PC-9 (cell line): ENCODE measurements at regions of chr5 and their contacts with region 1.

Region 1: GRCh38 chr5:178626484-178627258 is at the start of gene CLK4:
- DNase-seq: peak; percentile 77 to 95
- H3K4me3 ChIP-seq: peak within 1 kb of the TSS; percentile 85
- H3K27ac ChIP-seq: peak within 1 kb of the TSS; percentile 60
- H3K4me1 ChIP-seq: peaks cover 41% of the 10 kb centered on the region
- H3K27me3 ChIP-seq: no peaks in the 10 kb centered on the region
- CTCF ChIP-seq: no peak
- total RNA-seq, gene CLK4: 25.0 and 29.7 TPM in 2 replicates

Region 2: GRCh38 chr5:178232124-178232919 is 394.3 kb before region 1 on chr5 and contains the start of gene PHYKPL:
- CTCF ChIA-PET with region 1: no interaction called
- POLR2A ChIA-PET with region 1: no interaction called
- intact Hi-C with region 1: loop called (anchors 10 kb)
- DNase-seq: peak; percentile 42 to 70
- H3K4me3 ChIP-seq: peak within 1 kb of the TSS; percentile 100
- H3K27ac ChIP-seq: peak within 1 kb of the TSS; percentile 44
- H3K4me1 ChIP-seq: peaks cover 17% of the 10 kb centered on the region
- H3K27me3 ChIP-seq: no peaks in the 10 kb centered on the region
- CTCF ChIP-seq: no peak
- total RNA-seq, gene PHYKPL: 61.3 and 73.7 TPM in 2 replicates

Region 3: DNA sequence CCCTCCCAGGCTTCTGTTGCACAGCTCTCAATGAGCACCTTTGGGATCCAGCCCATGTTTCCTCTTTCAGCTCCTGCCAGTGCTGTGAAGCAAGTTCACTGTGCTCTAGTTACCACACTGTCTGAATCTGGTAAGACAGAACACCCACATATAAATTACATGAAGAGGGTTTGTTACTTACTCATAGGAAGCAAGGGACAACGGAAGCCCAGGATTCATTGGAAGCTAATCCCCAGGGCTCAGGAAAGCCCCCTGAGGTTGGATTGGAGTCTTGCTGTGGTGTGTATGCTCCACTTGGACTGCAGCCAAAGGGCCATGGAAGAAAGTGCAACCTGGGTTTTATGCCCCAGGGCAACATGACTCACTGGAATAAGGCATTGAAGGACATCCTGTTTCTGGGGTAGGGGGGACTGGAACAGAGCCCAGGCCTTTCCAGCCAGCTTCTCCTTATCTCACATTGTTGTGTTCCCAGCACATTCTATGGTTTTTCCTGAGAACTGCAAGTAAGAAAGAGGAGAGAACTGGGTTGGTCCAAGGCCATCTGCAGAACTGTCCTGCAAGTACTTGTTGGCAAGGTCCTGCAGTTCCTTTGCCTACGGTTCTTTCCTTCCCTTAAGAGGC is 15.8 kb after region 1 on chr5:
- CTCF ChIA-PET with region 1: no interaction called
- POLR2A ChIA-PET with region 1: interaction called, 8 read pairs
- intact Hi-C with region 1: loop called (anchors 1 kb)
- DNase-seq: peak; percentile 97 to 98
- H3K4me3 ChIP-seq: 0 out of 2 replicates have a peak overlapping the region, but pooled peaks have one; percentile 12
- H3K27ac ChIP-seq: peak overlapping the region; percentile 74
- H3K4me1 ChIP-seq: peaks cover 52% of the 10 kb centered on the region
- H3K27me3 ChIP-seq: no peaks in the 10 kb centered on the region
- CTCF ChIP-seq: no peak

Region 4: GRCh38 chr5:178677429-178677828 is 50.8 kb after region 1 on chr5:
- CTCF ChIA-PET with region 1: no interaction called
- POLR2A ChIA-PET with region 1: no interaction called
- intact Hi-C with region 1: loop called (anchors 2 kb)
- DNase-seq: no peak
- H3K4me3 ChIP-seq: no peak overlapping the region
- H3K27ac ChIP-seq: no peak overlapping the region
- H3K4me1 ChIP-seq: no peaks in the 10 kb centered on the region
- H3K27me3 ChIP-seq: peaks cover 7% of the 10 kb centered on the region; the same call in 1 of the 2 replicates
- CTCF ChIP-seq: no peak

Region 5: GRCh38 chr5:178739452-178740193 is 113.0 kb after region 1 on chr5:
- CTCF ChIA-PET with region 1: no interaction called
- POLR2A ChIA-PET with region 1: no interaction called
- intact Hi-C with region 1: no loop called
- DNase-seq: no peak
- H3K4me3 ChIP-seq: no peak overlapping the region
- H3K27ac ChIP-seq: no peak overlapping the region
- H3K4me1 ChIP-seq: no peaks in the 10 kb centered on the region
- H3K27me3 ChIP-seq: no peaks in the 10 kb centered on the region
- CTCF ChIP-seq: no peak

Region 6: GRCh38 chr5:178786859-178787760 is 160.4 kb after region 1 on chr5:
- CTCF ChIA-PET with region 1: no interaction called
- POLR2A ChIA-PET with region 1: no interaction called
- intact Hi-C with region 1: loop called (anchors 1 kb)
- DNase-seq: peak; percentile 68 to 95
- H3K4me3 ChIP-seq: no peak overlapping the region; the same call in 1 of the 2 replicates
- H3K27ac ChIP-seq: peak overlapping the region; percentile 23; the same call in 1 of the 2 replicates
- H3K4me1 ChIP-seq: peaks cover 23% of the 10 kb centered on the region
- H3K27me3 ChIP-seq: no peaks in the 10 kb centered on the region
- CTCF ChIP-seq: no peak; the same call in 1 of the 2 replicates